ENCODE measurements at regions of chr2 and their contacts with region 1.

Region 1: GRCh38 chr2:10448208-10448645 is at the start of gene ODC1:
- DNase-seq: peak; percentile 98 to 99
- H3K4me3 ChIP-seq: peak within 1 kb of the TSS; percentile 97
- H3K4me3 Mint-ChIP-seq: peak within 1 kb of the TSS; percentile 84
- H3K27ac Mint-ChIP-seq: peak within 1 kb of the TSS; percentile 87
- H3K4me1 ChIP-seq: peaks cover 17% of the 10 kb centered on the region
- H3K4me1 Mint-ChIP-seq: peaks cover 17% of the 10 kb centered on the region
- H3K27me3 ChIP-seq: no peaks in the 10 kb centered on the region
- H3K27me3 Mint-ChIP-seq: no peaks in the 10 kb centered on the region
- CTCF ChIP-seq: no peak
- total RNA-seq, gene ODC1: 277 and 285 TPM in 2 replicates

Region 2: GRCh38 chr2:9914384-9915065 is 533.7 kb before region 1 on chr2:
- CTCF ChIA-PET with region 1: no interaction called
- POLR2A ChIA-PET with region 1: no interaction called
- intact Hi-C with region 1: no loop called
- DNase-seq: no peak
- H3K4me3 ChIP-seq: no peak overlapping the region
- H3K4me3 Mint-ChIP-seq: no peak overlapping the region
- H3K27ac Mint-ChIP-seq: no peak overlapping the region
- H3K4me1 ChIP-seq: no peaks in the 10 kb centered on the region
- H3K4me1 Mint-ChIP-seq: no peaks in the 10 kb centered on the region
- H3K27me3 ChIP-seq: no peaks in the 10 kb centered on the region
- H3K27me3 Mint-ChIP-seq: no peaks in the 10 kb centered on the region
- CTCF ChIP-seq: no peak

Region 3: DNA sequence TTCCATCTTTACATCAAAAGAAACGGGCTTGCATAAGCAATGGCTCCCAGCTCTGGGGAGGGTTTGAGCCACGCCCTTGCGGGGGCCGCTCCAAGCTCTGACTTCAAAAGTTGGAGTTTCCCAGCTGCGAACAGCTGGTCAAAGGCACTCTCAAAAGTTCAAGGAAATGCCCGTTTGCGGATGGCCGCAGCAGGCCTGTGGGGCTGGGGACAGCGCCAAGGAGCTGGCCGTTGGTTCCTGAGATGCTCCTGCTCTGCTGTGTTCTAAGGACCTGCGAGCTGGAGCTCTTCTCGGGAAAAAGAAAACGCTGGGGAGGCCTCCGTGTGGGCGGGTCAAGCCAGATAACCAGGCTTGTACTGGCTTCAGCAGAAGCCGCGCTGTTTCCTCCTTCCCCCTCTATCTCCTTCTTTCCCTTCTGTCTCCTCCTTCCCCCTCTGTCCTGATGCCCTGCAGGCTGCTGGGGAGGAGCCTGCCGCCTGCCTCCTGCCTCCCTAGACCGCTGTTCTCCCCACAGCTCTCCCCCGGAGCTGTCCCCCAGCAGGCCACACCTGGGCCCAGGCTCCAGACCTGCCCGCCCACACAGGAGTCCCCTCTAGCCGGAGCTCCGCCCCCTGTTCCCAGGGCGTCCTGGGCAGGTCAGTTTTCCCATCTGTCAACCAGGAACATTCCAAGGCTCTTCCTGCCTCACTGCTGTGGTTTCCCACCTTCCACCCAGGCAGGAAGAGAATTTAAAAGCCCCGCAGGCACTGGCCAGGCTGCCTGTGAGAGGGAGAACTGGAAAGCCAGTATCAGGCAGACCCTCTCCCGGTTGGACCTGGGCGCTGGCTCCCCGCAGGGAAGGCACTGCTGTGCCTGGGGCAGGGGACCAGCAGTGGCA is 390.8 kb before region 1 on chr2:
- CTCF ChIA-PET with region 1: no interaction called
- POLR2A ChIA-PET with region 1: interaction called, 10 read pairs
- intact Hi-C with region 1: no loop called
- DNase-seq: peak; percentile 90 to 95
- H3K4me3 ChIP-seq: peak overlapping the region; percentile 37
- H3K4me3 Mint-ChIP-seq: peak overlapping the region; percentile 71
- H3K27ac Mint-ChIP-seq: peak overlapping the region; percentile 71
- H3K4me1 ChIP-seq: peaks cover 13% of the 10 kb centered on the region
- H3K4me1 Mint-ChIP-seq: peaks cover 14% of the 10 kb centered on the region
- H3K27me3 ChIP-seq: no peaks in the 10 kb centered on the region
- H3K27me3 Mint-ChIP-seq: no peaks in the 10 kb centered on the region
- CTCF ChIP-seq: no peak

Region 4: DNA sequence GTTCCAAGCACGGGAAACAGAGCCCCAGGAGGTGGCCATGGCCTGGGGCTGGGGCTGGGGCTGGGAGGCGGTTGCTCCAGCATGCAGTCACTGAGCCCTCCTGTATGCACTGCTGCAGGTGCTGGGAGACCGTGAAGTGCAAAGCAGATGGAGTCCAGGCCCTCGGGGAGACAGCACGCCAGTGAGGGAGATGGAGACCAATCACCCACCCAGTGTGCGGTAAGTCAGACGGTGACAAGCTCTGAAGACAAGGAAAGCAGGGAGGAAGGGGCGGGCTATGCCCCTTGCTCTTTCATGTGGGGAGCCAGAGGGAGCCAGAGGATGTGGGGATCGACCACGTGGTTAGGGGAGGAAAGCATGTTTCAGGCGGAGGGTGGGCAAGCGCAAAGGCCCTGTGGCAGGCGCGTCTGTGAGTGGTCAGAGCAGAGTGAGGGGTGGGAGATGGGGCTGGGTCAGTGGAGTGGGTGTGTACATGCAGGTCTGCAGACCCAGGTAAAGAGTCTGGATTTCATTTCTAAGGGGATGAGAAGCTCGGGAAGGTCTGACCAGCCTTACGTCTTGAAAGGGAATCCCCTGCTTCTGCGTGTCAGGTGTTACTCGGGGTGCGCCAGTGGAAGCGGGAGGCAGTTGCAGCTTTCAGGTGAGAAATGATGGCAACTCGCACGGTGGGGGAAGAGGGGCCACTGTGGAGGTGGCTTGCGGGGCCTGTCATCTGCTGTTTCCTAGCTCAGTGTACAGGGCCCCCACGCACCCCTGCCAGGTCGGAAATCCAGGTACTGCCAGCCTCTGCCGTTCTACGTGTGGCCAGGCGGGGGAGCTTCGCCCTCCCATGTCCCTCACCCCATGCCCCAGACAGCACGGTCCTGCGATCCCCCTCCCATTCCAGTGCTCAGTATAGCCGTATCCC is 306.2 kb before region 1 on chr2:
- CTCF ChIA-PET with region 1: no interaction called
- POLR2A ChIA-PET with region 1: interaction called, 10 read pairs
- intact Hi-C with region 1: no loop called
- DNase-seq: peak in 1 of 2 experiments; percentile 56
- H3K4me3 ChIP-seq: no peak overlapping the region
- H3K4me3 Mint-ChIP-seq: no peak overlapping the region
- H3K27ac Mint-ChIP-seq: peak overlapping the region; percentile 23
- H3K4me1 ChIP-seq: 0 out of 2 replicates have a peak, but pooled peaks cover 5% of the 10 kb centered on the region
- H3K4me1 Mint-ChIP-seq: no peaks in the 10 kb centered on the region
- H3K27me3 ChIP-seq: no peaks in the 10 kb centered on the region
- H3K27me3 Mint-ChIP-seq: no peaks in the 10 kb centered on the region
- CTCF ChIP-seq: peak; percentile 45 to 62

Region 5: DNA sequence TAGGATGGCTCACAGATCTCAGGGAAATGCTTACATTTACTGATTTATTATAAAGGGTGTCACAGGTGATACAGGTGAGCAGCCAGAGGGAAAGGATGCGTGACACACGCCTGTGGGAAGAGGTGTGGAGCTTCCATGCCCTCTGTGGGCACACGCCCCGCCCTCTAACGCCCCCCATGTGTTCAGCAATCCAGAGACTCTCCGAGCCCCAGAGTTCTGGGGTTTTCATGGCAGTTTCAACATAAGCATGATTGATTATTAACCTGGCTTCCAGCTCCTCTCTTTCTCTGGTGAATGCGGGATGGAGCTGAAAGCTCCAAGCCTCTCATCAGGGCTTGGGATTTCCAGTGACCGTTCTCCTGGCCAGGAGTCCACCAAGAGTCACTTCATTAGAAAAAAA is 34.2 kb after region 1 on chr2:
- CTCF ChIA-PET with region 1: interaction called, 6 read pairs
- POLR2A ChIA-PET with region 1: interaction called, 11 read pairs
- intact Hi-C with region 1: loop called (anchors 1 kb)
- DNase-seq: peak; percentile 43 to 64
- H3K4me3 ChIP-seq: no peak overlapping the region
- H3K4me3 Mint-ChIP-seq: peak overlapping the region; percentile 61
- H3K27ac Mint-ChIP-seq: peak overlapping the region; percentile 68
- H3K4me1 ChIP-seq: peaks cover 34% of the 10 kb centered on the region
- H3K4me1 Mint-ChIP-seq: peaks cover 18% of the 10 kb centered on the region
- H3K27me3 ChIP-seq: no peaks in the 10 kb centered on the region
- H3K27me3 Mint-ChIP-seq: no peaks in the 10 kb centered on the region
- CTCF ChIP-seq: no peak

Region 6: GRCh38 chr2:10552220-10552870 is 104.1 kb after region 1 on chr2:
- CTCF ChIA-PET with region 1: no interaction called
- POLR2A ChIA-PET with region 1: no interaction called
- intact Hi-C with region 1: loop called (anchors 5 kb)
- DNase-seq: no peak
- H3K4me3 ChIP-seq: no peak overlapping the region
- H3K4me3 Mint-ChIP-seq: no peak overlapping the region
- H3K27ac Mint-ChIP-seq: no peak overlapping the region
- H3K4me1 ChIP-seq: no peaks in the 10 kb centered on the region
- H3K4me1 Mint-ChIP-seq: peaks cover 11% of the 10 kb centered on the region
- H3K27me3 ChIP-seq: no peaks in the 10 kb centered on the region
- H3K27me3 Mint-ChIP-seq: no peaks in the 10 kb centered on the region
- CTCF ChIP-seq: no peak

Region 7: GRCh38 chr2:10584796-10585475 is 136.7 kb after region 1 on chr2:
- CTCF ChIA-PET with region 1: no interaction called
- POLR2A ChIA-PET with region 1: no interaction called
- intact Hi-C with region 1: no loop called
- DNase-seq: peak; percentile 80 to 82
- H3K4me3 ChIP-seq: no peak overlapping the region
- H3K4me3 Mint-ChIP-seq: peak overlapping the region; percentile 52
- H3K27ac Mint-ChIP-seq: peak overlapping the region; percentile 91
- H3K4me1 ChIP-seq: peaks cover 22% of the 10 kb centered on the region
- H3K4me1 Mint-ChIP-seq: peaks cover 47% of the 10 kb centered on the region
- H3K27me3 ChIP-seq: no peaks in the 10 kb centered on the region
- H3K27me3 Mint-ChIP-seq: no peaks in the 10 kb centered on the region
- CTCF ChIP-seq: no peak

Measured in Caco-2 (cell line).